ENCODE measurements at regions of chr11 and their contacts with region 1.

Region 1: GRCh38 chr11:32893343-32894148 is 935 bp downstream of the QSER1 start:
- DNase-seq: peak; percentile 27
- H3K4me3 ChIP-seq: peak overlapping the region; percentile 85 to 94 (median 86)
- H3K27ac ChIP-seq: peak overlapping the region; percentile 89
- H3K4me1 ChIP-seq: peaks cover 13% of the 10 kb centered on the region
- H3K27me3 ChIP-seq: no peaks in the 10 kb centered on the region
- CTCF ChIP-seq: peak; percentile 20 to 67

Region 2: DNA sequence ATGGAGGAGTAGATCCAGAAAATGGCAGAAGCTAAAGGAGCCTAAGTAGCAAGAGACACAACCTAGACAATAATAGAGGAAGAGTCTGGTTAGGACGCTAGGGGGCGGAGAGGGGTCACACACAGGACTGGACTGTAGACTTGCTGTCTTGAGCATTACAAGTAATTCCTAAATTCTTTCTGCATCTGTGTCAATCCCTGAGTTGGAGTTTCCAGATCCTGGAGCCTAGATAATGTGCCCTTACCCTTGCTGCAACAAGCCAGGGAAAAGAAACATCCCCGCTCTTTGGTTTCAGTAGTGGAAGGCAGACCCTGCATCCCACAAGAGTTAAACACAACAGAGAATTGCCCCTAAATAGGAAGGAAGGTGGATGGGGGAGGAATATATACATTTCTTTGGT is 84.2 kb before region 1 on chr11:
- CTCF ChIA-PET with region 1: interaction called, 4 read pairs
- dilution Hi-C with region 1: no loop called
- in situ Hi-C with region 1: no loop called
- intact Hi-C with region 1: loop called (anchors 1 kb)
- DNase-seq: peak; percentile 67
- H3K4me3 ChIP-seq: no peak overlapping the region
- H3K27ac ChIP-seq: no peak overlapping the region
- H3K4me1 ChIP-seq: no peaks in the 10 kb centered on the region
- H3K27me3 ChIP-seq: no peaks in the 10 kb centered on the region
- CTCF ChIP-seq: peak; percentile 90 to 92

Region 3: GRCh38 chr11:32829680-32830412 is 63.7 kb before region 1 on chr11 and contains the start of gene PRRG4:
- CTCF ChIA-PET with region 1: no interaction called
- dilution Hi-C with region 1: no loop called
- in situ Hi-C with region 1: loop called in 1 of 2 experiments (anchors 10 kb)
- intact Hi-C with region 1: no loop called
- DNase-seq: peak; percentile 90
- H3K4me3 ChIP-seq: peak within 1 kb of the TSS; percentile 56 to 93 (median 89)
- H3K27ac ChIP-seq: peak within 1 kb of the TSS; percentile 81
- H3K4me1 ChIP-seq: peaks cover 10% of the 10 kb centered on the region
- H3K27me3 ChIP-seq: no peaks in the 10 kb centered on the region
- CTCF ChIP-seq: no peak
- total RNA-seq, gene PRRG4: 10.3 to 15.2 TPM

Measured in mammary epithelial cell (primary cell).